Activated CD8-positive, alpha-beta memory T cell treated with anti-CD3 and anti-CD28 coated beads, Interleukin-2, amount 10 ng/mL, durations not matched to agents 7 days and 5 days (primary cell): ENCODE measurements at regions of chr1 and their contacts with region 1.

Region 1: GRCh38 chr1:24201941-24202440 is 14.9 kb upstream of the IFNLR1 start:
- DNase-seq: peak; percentile 71
- ATAC-seq: no peak
- H3K4me3 Mint-ChIP-seq: no peak overlapping the region
- H3K27ac Mint-ChIP-seq: no peak overlapping the region
- H3K4me1 Mint-ChIP-seq: peaks cover 23% of the 10 kb centered on the region
- H3K27me3 Mint-ChIP-seq: peaks cover 5% of the 10 kb centered on the region

Region 2: GRCh38 chr1:23964790-23965740 is 236.9 kb before region 1 on chr1:
- CTCF ChIA-PET with region 1: no interaction called
- DNase-seq: no peak
- ATAC-seq: peak; percentile 11
- H3K4me3 Mint-ChIP-seq: no peak overlapping the region
- H3K27ac Mint-ChIP-seq: peak overlapping the region; percentile 84
- H3K4me1 Mint-ChIP-seq: peaks cover 65% of the 10 kb centered on the region
- H3K27me3 Mint-ChIP-seq: no peaks in the 10 kb centered on the region

Region 3: DNA sequence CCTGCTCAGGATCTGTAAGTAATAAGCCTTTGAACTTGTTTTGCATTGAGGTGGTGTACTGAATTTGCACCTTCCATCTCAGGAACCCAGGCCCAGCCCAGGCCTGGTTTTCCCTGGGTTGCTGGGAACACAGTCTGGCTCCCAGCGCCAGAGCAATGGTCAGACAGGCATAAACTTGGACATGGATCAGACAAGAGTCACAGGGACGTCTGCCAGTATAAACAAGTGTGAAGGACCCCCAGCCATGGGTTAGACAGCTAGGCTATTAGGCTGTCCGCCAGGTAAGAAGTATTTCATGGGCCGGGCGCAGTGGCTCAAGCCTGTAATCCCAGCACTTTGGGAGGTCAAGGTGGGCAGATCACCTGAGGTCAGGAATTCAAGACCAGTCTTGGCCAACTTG is 20.4 kb before region 1 on chr1:
- CTCF ChIA-PET with region 1: interaction called, 98 read pairs
- DNase-seq: no peak
- ATAC-seq: no peak
- H3K4me3 Mint-ChIP-seq: no peak overlapping the region
- H3K27ac Mint-ChIP-seq: no peak overlapping the region
- H3K4me1 Mint-ChIP-seq: peaks cover 7% of the 10 kb centered on the region
- H3K27me3 Mint-ChIP-seq: no peaks in the 10 kb centered on the region

Region 4: GRCh38 chr1:24277420-24278169 is 75.6 kb after region 1 on chr1:
- CTCF ChIA-PET with region 1: interaction called, 12 read pairs
- DNase-seq: peak; percentile 50
- ATAC-seq: peak; percentile 94
- H3K4me3 Mint-ChIP-seq: peak overlapping the region; percentile 46
- H3K27ac Mint-ChIP-seq: peak overlapping the region; percentile 79
- H3K4me1 Mint-ChIP-seq: peaks cover 21% of the 10 kb centered on the region
- H3K27me3 Mint-ChIP-seq: peaks cover 32% of the 10 kb centered on the region

Region 5: DNA sequence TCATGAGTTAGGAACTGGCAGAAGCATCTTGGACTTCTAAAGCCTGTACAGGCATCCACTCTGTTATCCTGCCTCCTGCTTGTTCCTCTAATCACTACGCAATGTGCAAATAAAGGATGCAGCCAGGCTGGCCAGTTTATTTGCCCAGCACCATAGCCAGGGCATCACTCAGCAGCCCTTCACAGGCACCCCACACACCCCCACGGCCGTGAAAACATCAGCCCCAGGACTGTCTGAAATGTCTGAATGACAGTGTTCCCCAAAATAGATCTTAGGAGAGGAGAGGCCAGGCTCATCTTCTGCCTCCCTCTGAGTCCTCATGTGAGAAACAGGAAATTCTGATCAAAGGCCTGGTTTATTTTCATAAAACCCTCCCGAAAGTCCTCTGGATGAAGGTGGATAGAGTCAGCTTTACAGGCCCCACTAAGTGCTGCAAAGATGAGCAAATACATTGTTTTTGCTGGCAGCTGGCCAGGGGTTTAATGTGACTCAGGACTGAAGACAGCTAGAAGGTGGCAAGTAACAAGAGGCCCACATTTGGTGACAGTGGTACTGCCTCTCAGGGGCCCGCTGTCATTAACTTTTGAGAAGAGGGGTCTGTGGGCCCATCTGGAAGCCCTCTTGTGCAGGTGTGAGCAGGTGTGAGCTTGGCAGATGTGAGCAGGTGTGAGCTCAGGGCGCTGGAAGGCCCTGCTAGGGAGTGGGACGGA is 150.1 kb after region 1 on chr1:
- CTCF ChIA-PET with region 1: interaction called, 14 read pairs
- DNase-seq: peak; percentile 62
- ATAC-seq: peak; percentile 25
- H3K4me3 Mint-ChIP-seq: no peak overlapping the region
- H3K27ac Mint-ChIP-seq: peak overlapping the region; percentile 47
- H3K4me1 Mint-ChIP-seq: peaks cover 34% of the 10 kb centered on the region
- H3K27me3 Mint-ChIP-seq: peaks cover 4% of the 10 kb centered on the region

Region 6: DNA sequence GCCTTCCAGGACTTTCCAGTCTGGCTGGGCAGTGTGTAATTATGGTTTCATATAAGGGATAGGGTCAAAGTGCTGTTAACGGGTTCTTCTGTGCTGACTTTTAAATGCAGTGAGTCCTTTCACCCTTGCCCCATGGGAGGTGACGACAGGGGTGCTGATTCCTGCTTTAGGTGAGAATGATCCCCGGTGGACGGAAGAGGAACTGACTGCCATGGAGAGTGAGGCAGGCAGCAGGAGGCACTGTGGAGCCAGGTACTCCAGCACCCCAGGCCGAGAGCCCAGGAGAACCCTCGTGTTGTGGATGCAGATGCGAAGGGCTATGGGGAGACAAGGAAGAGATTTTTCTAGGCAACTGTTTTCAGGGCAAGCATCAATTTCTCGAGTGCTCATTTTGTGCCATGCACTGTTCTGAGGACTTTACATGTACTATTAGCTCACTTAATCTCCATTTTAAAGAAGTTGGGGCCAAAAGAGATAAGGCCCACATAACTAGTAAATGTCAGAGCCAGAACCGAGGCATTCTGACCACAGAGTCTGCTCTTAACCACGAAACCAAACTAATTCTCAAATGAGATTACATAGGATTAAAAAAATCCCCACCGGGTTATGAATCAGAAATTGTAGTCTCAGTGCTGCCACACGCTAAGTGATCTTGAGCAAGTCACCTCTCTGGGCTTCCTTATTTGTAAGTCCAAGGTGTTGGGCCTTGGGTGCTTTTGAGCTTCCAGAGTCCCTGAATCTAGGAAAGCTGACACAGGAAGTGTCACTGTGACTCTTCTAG is 183.4 kb after region 1 on chr1:
- CTCF ChIA-PET with region 1: interaction called, 509 read pairs
- DNase-seq: peak; percentile 64
- ATAC-seq: peak; percentile 52
- H3K4me3 Mint-ChIP-seq: no peak overlapping the region
- H3K27ac Mint-ChIP-seq: peak overlapping the region; percentile 17
- H3K4me1 Mint-ChIP-seq: peaks cover 35% of the 10 kb centered on the region
- H3K27me3 Mint-ChIP-seq: no peaks in the 10 kb centered on the region

Region 7: DNA sequence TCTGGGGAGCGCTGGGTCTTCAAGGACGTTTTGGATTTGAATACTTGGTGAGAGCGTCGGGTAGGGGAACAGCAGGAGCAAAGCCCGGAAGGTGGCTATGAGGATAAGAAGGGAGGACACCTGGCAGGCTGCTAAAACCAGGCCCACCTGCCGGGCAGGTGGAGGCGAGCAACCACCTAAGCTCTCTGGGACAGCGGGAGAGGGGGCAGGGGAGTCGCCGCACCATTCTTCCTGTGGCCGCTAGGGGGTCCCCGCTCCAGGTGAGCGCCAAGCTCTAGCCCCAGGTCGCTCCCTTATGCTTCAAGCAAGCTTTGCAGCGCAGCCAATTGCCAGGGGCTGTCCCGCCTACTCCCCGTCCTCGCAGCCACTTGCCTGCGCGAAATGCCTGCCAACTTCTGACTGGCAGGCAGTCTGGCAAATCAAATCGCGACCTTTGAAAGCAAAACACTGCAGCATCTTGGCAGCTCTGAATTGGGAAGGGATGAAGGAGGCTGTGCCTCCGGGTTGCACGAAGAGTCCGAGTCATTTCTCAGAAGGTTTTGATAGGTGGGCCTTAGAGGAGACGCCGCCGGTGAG is 213.4 kb after region 1 on chr1 and contains the start of gene NIPAL3:
- CTCF ChIA-PET with region 1: interaction called, 18 read pairs
- DNase-seq: peak; percentile 100
- ATAC-seq: peak; percentile 97
- H3K4me3 Mint-ChIP-seq: peak within 1 kb of the TSS; percentile 90
- H3K27ac Mint-ChIP-seq: peak within 1 kb of the TSS; percentile 87
- H3K4me1 Mint-ChIP-seq: peaks cover 53% of the 10 kb centered on the region
- H3K27me3 Mint-ChIP-seq: no peaks in the 10 kb centered on the region
- total RNA-seq, gene NIPAL3: 35.4 to 44.2 TPM

Region 8: GRCh38 chr1:24586970-24587820 is 385.2 kb after region 1 on chr1:
- CTCF ChIA-PET with region 1: interaction called, 16 read pairs
- DNase-seq: peak; percentile 69
- ATAC-seq: peak; percentile 95
- H3K4me3 Mint-ChIP-seq: no peak overlapping the region
- H3K27ac Mint-ChIP-seq: peak overlapping the region; percentile 12
- H3K4me1 Mint-ChIP-seq: peaks cover 10% of the 10 kb centered on the region
- H3K27me3 Mint-ChIP-seq: peaks cover 7% of the 10 kb centered on the region